ENCODE measurements at regions of chr2 and their contacts with region 1.

Region 1: DNA sequence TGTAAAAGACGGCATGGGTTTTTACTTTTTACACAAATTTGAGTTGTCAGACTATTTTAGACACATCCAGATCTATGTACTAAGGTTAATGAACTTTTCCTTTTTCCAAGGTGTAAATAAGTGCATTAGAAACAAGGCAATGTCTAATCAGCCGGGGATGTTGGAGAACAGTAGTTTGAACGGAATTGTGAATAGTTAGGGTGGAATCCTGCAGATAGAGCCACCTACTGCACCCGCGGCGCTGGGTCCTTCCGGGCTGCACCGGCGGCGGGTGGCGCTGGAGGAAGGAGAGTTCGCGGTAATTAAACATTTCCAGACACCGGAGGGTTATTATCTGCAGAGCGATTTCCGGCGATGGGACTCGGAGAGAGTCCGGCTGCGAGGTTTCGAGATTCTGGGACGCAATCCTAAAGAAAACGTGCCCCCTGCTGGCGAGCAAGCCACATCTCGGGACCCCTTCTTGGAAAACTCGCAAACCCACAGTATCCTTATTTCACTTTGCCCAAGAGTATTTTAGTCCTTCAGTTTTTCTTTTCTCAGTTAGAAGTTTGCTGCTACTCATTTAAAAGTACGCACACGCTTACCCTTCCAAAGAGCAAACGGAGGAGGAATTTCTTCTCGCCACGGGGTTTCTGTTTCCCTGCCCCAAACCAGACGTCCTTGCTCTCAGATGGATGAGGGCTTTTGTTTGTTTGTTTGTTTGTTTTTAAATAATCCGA is 4.5 kb upstream of the OSR1 start:
- DNase-seq: peak; percentile 76 to 91
- H3K4me3 ChIP-seq: peak overlapping the region; percentile 57 to 60
- H3K27ac ChIP-seq: peak overlapping the region; percentile 55 to 93
- H3K4me1 ChIP-seq: peaks cover 0 to 30% (median 14%) of the 10 kb centered on the region in 4 donors
- H3K27me3 ChIP-seq: no peaks in the 10 kb centered on the region
- CTCF ChIP-seq: peak; percentile 79 to 80

Region 2: GRCh38 chr2:19425419-19425818 is 62.5 kb after region 1 on chr2:
- intact Hi-C with region 1: no loop called
- DNase-seq: no peak
- H3K4me3 ChIP-seq: no peak overlapping the region
- H3K27ac ChIP-seq: no peak overlapping the region
- H3K4me1 ChIP-seq: no peaks in the 10 kb centered on the region
- H3K27me3 ChIP-seq: no peaks in the 10 kb centered on the region
- CTCF ChIP-seq: no peak

Region 3: GRCh38 chr2:19801367-19802080 is 438.6 kb after region 1 on chr2:
- intact Hi-C with region 1: loop called (anchors 5 kb)
- DNase-seq: peak; percentile 94 to 98
- H3K4me3 ChIP-seq: no peak overlapping the region
- H3K27ac ChIP-seq: peak overlapping the region; percentile 73 to 77
- H3K4me1 ChIP-seq: peaks cover 0 to 45% (median 34%) of the 10 kb centered on the region in 4 donors
- H3K27me3 ChIP-seq: no peaks in the 10 kb centered on the region
- CTCF ChIP-seq: no peak

Region 4: GRCh38 chr2:20868377-20868776 is 1505.5 kb after region 1 on chr2:
- intact Hi-C with region 1: no loop called
- DNase-seq: no peak
- H3K4me3 ChIP-seq: no peak overlapping the region
- H3K27ac ChIP-seq: no peak overlapping the region
- H3K4me1 ChIP-seq: no peaks in the 10 kb centered on the region
- H3K27me3 ChIP-seq: no peaks in the 10 kb centered on the region
- CTCF ChIP-seq: no peak

Measured in tibial artery (tissue), 4 donors.